Activated CD4-positive, alpha-beta memory T cell treated with anti-CD3 and anti-CD28 coated beads for 36 hours (primary cell): ENCODE measurements at regions of chr7 and their contacts with region 1.

Region 1: GRCh38 chr7:151080522-151081169 is at the start of gene FASTK:
- DNase-seq: peak; percentile 93
- H3K4me3 Mint-ChIP-seq: peak within 1 kb of the TSS; percentile 98
- H3K27ac Mint-ChIP-seq: peak within 1 kb of the TSS; percentile 86
- H3K4me1 Mint-ChIP-seq: peaks cover 35% of the 10 kb centered on the region
- H3K27me3 Mint-ChIP-seq: peaks cover 5% of the 10 kb centered on the region
- total RNA-seq, gene FASTK: 56.8 to 57.4 TPM

Region 2: GRCh38 chr7:151057989-151058780 is 22.5 kb before region 1 on chr7:
- CTCF ChIA-PET with region 1: interaction called, 3 read pairs
- POLR2A ChIA-PET with region 1: interaction called, 3 read pairs
- intact Hi-C with region 1: loop called (anchors 1 kb)
- DNase-seq: peak; percentile 98
- H3K4me3 Mint-ChIP-seq: peak overlapping the region; percentile 89
- H3K27ac Mint-ChIP-seq: peak overlapping the region; percentile 89
- H3K4me1 Mint-ChIP-seq: peaks cover 25% of the 10 kb centered on the region
- H3K27me3 Mint-ChIP-seq: no peaks in the 10 kb centered on the region

Region 3: GRCh38 chr7:151232091-151232916 is 151.7 kb after region 1 on chr7 and contains the start of gene CHPF2:
- CTCF ChIA-PET with region 1: no interaction called
- POLR2A ChIA-PET with region 1: no interaction called
- intact Hi-C with region 1: loop called (anchors 1 kb)
- DNase-seq: peak; percentile 95
- H3K4me3 Mint-ChIP-seq: peak within 1 kb of the TSS; percentile 100
- H3K27ac Mint-ChIP-seq: peak within 1 kb of the TSS; percentile 99
- H3K4me1 Mint-ChIP-seq: peaks cover 38% of the 10 kb centered on the region
- H3K27me3 Mint-ChIP-seq: no peaks in the 10 kb centered on the region
- total RNA-seq, gene CHPF2: 33.6 to 34.2 TPM